T-cell (primary cell): ENCODE measurements at regions of chr1 and their contacts with region 1.

Region 1: GRCh38 chr1:51736702-51737101 is 119.8 kb downstream of the OSBPL9 start:
- DNase-seq: peak in 1 of 35 experiments; percentile 21
- ATAC-seq: no peak
- H3K4me3 ChIP-seq: no peak overlapping the region
- H3K4me3 Mint-ChIP-seq: no peak overlapping the region
- H3K27ac ChIP-seq: no peak overlapping the region
- H3K27ac Mint-ChIP-seq: no peak overlapping the region
- H3K4me1 ChIP-seq: peaks cover 8 to 12% of the 10 kb centered on the region in 2 experiments
- H3K4me1 Mint-ChIP-seq: peaks cover 52 to 65% (median 60%) of the 10 kb centered on the region in 3 donors
- H3K27me3 ChIP-seq: no peaks in the 10 kb centered on the region
- H3K27me3 Mint-ChIP-seq: no peaks in the 10 kb centered on the region

Region 2: DNA sequence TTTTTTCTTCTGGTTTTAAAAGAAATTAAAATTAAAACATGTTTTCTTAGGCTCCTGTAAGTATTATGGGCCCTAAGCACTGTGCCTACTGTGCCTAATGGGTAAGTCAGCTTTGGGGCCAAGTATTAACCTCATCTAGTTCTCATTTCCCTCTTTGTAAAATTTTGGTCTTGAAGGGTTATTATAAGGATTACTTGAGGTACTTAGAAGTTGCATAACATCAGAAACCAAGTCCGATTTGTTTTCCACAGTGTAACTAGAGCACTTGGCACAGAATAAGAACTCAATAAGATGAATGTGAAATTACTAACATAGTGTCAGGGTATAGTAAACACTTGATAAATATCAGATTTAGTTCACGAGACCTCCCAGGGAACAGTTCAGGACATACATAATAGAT is 136.2 kb before region 1 on chr1:
- CTCF ChIA-PET with region 1: no interaction called
- POLR2A ChIA-PET with region 1: no interaction called
- DNase-seq: no peak
- ATAC-seq: no peak
- H3K4me3 ChIP-seq: no peak overlapping the region
- H3K4me3 Mint-ChIP-seq: no peak overlapping the region
- H3K27ac ChIP-seq: no peak overlapping the region
- H3K27ac Mint-ChIP-seq: no peak overlapping the region
- H3K4me1 ChIP-seq: no peaks in the 10 kb centered on the region
- H3K4me1 Mint-ChIP-seq: no peaks in the 10 kb centered on the region
- H3K27me3 ChIP-seq: peaks cover 0 to 3% of the 10 kb centered on the region in 2 experiments
- H3K27me3 Mint-ChIP-seq: no peaks in the 10 kb centered on the region

Region 3: GRCh38 chr1:51760872-51761271 is 24.2 kb after region 1 on chr1:
- CTCF ChIA-PET with region 1: interaction called in 1 of 2 experiments, 3 read pairs
- POLR2A ChIA-PET with region 1: interaction called in 1 of 2 experiments, 10 read pairs
- DNase-seq: no peak
- ATAC-seq: no peak
- H3K4me3 ChIP-seq: no peak overlapping the region
- H3K4me3 Mint-ChIP-seq: no peak overlapping the region
- H3K27ac ChIP-seq: no peak overlapping the region
- H3K27ac Mint-ChIP-seq: peak overlapping the region; percentile 7 to 53
- H3K4me1 ChIP-seq: no peaks in the 10 kb centered on the region
- H3K4me1 Mint-ChIP-seq: peaks cover 4 to 9% (median 6%) of the 10 kb centered on the region in 3 donors
- H3K27me3 ChIP-seq: no peaks in the 10 kb centered on the region
- H3K27me3 Mint-ChIP-seq: no peaks in the 10 kb centered on the region